Breast epithelium (tissue), 4 donors: ENCODE measurements at regions of chr11 and their contacts with region 1.

Region 1: DNA sequence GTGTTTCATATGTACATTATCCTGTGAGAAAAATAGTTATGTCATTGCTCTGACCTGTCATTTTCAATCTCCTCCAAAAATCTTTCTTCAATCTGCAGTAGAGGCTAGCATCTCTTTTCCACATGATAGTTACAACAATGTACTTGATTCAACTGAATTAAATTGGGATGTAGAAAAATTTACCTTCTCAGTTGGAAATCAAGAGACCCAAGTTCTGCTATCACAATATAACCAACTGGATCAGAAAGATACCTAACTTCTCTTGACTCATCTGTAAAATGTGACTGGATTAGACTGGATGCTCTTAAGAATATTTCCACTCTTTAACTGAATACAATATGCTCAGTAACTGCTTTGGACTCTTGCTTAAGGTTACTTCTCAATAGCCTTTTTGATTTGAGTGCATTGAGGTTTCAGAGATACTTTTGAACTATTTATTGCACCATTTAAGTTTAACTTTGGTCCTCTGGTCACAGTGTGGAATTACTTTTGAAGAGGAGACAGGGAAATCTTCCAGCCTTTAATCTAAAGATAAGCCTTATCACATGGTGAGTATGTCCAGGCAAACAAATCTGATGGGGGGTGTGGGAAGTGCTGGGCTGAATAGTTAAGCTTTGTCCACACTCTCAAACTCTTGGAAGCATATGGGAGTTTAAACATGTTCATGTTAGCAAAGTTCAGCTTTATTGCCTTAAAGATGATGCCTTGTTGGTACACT is 82.3 kb downstream of the YAP1 start:
- DNase-seq: no peak
- H3K4me3 ChIP-seq: no peak overlapping the region
- H3K27ac ChIP-seq: no peak overlapping the region
- H3K4me1 ChIP-seq: peaks cover 0 to under 1% of the 10 kb centered on the region in 2 donors
- H3K27me3 ChIP-seq: no peaks in the 10 kb centered on the region
- CTCF ChIP-seq: no peak
- POLR2A ChIP-seq: no peak

Region 2: DNA sequence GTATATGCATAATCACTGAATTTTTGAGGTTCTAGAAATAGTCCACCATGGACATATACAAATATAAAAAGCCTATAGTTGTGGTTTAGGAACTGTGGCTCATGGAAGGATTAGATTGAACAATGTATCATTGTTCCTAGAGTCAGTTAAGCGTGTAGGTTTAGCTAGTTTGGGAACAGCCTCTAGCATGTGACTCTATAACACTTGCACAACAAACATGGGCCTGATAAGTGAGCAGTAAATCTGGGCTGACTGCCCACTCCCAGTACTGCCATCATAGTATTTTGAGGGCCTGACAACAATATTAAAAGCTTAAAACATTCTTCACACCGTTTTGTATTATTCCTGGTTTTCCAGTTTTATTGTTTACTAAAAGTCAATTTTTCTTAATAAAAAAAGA is 35.3 kb before region 1 on chr11:
- intact Hi-C with region 1: no loop called
- DNase-seq: peak in 1 of 2 donors; percentile 40
- H3K4me3 ChIP-seq: no peak overlapping the region
- H3K27ac ChIP-seq: peak overlapping the region in 1 of 2 donors; percentile 19
- H3K4me1 ChIP-seq: peaks cover 0 to 14% of the 10 kb centered on the region in 2 donors
- H3K27me3 ChIP-seq: no peaks in the 10 kb centered on the region
- CTCF ChIP-seq: no peak
- POLR2A ChIP-seq: no peak

Region 3: GRCh38 chr11:102323542-102324251 is 131.2 kb after region 1 on chr11:
- intact Hi-C with region 1: loop called (anchors 5 kb)
- DNase-seq: no peak
- H3K4me3 ChIP-seq: no peak overlapping the region
- H3K27ac ChIP-seq: no peak overlapping the region
- H3K4me1 ChIP-seq: no peaks in the 10 kb centered on the region
- H3K27me3 ChIP-seq: no peaks in the 10 kb centered on the region
- CTCF ChIP-seq: no peak
- POLR2A ChIP-seq: no peak